HCT116 (cell line): ENCODE measurements at regions of chr1 and their contacts with region 1.

Region 1: GRCh38 chr1:162248854-162249535 is 127.7 kb downstream of the SPATA46 start:
- DNase-seq: no peak
- ATAC-seq: no peak
- H3K4me3 ChIP-seq: no peak overlapping the region
- H3K27ac ChIP-seq: no peak overlapping the region
- H3K4me1 ChIP-seq: no peaks in the 10 kb centered on the region
- H3K27me3 ChIP-seq: no peaks in the 10 kb centered on the region
- CTCF ChIP-seq: no peak
- POLR2A ChIP-seq: no peak
- RAD21 ChIP-seq: no peak

Region 2: DNA sequence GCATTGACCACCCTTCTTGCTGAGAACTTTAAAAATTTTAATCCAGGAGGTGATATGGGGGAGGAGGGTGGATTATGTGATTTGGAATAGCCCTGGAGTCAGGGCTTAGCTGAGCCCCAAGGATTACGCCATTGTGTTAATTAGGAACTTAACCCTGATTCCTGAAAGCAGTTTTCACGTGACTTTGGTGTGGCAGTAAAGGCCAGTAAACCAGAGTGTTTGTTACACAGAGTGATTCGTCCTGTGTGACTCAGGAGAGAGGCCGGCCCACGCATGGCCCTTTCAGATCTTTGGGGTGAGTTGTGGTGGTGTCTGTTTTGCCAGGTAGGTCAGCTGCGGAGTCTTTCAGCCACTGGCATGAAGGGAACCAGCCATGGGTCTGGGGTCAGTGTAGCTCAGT is 71.9 kb before region 1 on chr1:
- CTCF ChIA-PET with region 1: no interaction called
- POLR2A ChIA-PET with region 1: no interaction called
- RAD21 ChIA-PET with region 1: no interaction called
- intact Hi-C with region 1: no loop called
- DNase-seq: no peak
- ATAC-seq: peak; percentile 53; the same call in 1 of the 2 replicates
- H3K4me3 ChIP-seq: no peak overlapping the region
- H3K27ac ChIP-seq: no peak overlapping the region
- H3K4me1 ChIP-seq: peaks cover 0 to 8% of the 10 kb centered on the region in 2 experiments; a peak in 3 of 4 replicates
- H3K27me3 ChIP-seq: no peaks in the 10 kb centered on the region
- CTCF ChIP-seq: no peak
- POLR2A ChIP-seq: no peak
- RAD21 ChIP-seq: no peak

Region 3: GRCh38 chr1:162391790-162392563 is 143.0 kb after region 1 on chr1:
- CTCF ChIA-PET with region 1: no interaction called
- POLR2A ChIA-PET with region 1: no interaction called
- RAD21 ChIA-PET with region 1: no interaction called
- intact Hi-C with region 1: loop called (anchors 10 kb)
- DNase-seq: peak; percentile 42
- ATAC-seq: peak; percentile 73
- H3K4me3 ChIP-seq: no peak overlapping the region
- H3K27ac ChIP-seq: no peak overlapping the region
- H3K4me1 ChIP-seq: peaks cover 0 to 4% of the 10 kb centered on the region in 2 experiments; a peak in 2 of 4 replicates
- H3K27me3 ChIP-seq: no peaks in the 10 kb centered on the region
- CTCF ChIP-seq: peak; percentile 76 to 86 (median 82)
- POLR2A ChIP-seq: no peak
- RAD21 ChIP-seq: peak; percentile 93